Activated CD8-positive, alpha-beta T cell treated with anti-CD3 and anti-CD28 coated beads, Interleukin-2, amount 10 ng/mL, durations not matched to agents 7 days and 5 days (primary cell): ENCODE measurements at regions of chr20 and their contacts with region 1.

Region 1: DNA sequence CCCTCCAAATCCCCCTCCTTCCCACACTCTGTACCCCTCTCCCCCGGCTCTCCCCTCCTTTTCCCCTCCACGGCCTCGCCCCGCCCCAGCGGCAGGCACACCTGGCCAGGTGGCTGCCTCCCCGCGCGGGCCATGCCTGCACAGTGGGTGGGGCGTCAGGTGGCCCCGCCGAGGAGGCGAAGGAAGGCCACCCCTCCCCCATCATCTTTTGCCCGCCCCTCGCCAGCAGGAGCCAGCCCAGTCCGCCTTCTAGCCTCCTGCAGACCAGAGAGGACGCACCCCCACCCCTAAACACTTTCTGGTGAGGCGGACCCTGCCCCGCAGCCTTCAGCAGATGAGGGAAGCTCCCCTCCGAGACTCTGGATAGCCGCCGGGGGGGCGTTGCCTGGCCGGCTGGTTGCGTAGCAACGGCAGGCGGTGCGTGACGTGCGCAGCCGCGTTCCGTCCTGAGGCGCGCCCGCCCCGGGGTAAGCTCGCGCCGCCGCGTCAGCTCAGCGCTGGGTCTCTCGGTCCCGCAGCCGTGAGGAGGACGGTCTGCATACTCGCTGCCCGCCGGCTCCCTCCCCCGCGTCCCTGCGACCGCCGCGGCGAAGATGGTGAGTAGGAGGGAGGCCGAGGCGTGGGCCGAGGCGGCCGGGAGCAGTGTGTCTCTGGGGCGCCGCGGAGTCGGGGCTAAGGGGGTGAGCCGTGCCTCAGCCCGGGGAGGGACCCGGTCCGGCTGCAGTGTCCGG is at the start of gene DSTN:
- DNase-seq: peak; percentile 90
- ATAC-seq: peak; percentile 92
- H3K4me3 Mint-ChIP-seq: peak within 1 kb of the TSS; percentile 92
- H3K27ac Mint-ChIP-seq: peak within 1 kb of the TSS; percentile 87
- H3K4me1 Mint-ChIP-seq: peaks cover 25% of the 10 kb centered on the region
- H3K27me3 Mint-ChIP-seq: peaks cover 20% of the 10 kb centered on the region
- total RNA-seq, gene DSTN: 59.0 to 63.6 TPM

Region 2: DNA sequence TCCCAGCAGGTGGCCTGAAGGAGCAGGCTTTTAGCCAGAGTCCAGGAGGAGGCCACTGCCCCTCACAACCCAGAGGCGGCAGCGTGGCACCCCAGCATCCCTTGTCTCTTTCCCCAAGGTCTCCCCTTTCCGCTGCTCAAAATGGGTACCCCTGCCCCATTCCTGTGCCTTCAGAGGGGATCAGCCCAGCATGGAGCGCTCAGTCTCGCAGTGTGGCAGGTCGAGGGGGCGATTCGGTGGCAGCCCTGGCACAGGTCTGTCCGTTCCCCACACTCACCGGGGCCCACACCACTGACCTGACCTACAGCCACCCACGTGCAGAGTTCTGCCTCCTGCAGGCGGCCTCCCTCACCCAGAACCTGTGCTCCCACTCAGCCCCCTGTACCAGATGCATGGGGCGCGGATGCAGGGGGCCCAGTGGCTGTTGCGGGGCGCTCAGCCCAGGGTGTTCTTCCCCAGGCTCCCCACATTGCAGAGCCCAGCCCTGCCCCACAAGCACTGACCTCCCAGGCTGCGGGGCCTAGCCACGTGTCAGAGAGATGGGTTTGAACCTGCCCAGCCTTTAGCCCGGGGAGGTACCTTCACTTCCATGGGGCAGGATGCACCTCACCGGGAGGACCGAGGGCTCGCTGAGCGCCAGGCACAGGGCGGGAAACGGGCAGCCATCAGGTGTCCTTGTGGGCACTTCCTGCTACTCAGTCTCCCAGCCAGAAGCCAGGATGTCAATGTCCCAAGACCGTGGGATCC is 41.9 kb after region 1 on chr20:
- CTCF ChIA-PET with region 1: interaction called, 9 read pairs
- POLR2A ChIA-PET with region 1: interaction called, 24 read pairs
- DNase-seq: peak; percentile 44
- ATAC-seq: peak; percentile 4
- H3K4me3 Mint-ChIP-seq: peak overlapping the region; percentile 67
- H3K27ac Mint-ChIP-seq: peak overlapping the region; percentile 97
- H3K4me1 Mint-ChIP-seq: peaks cover 47% of the 10 kb centered on the region
- H3K27me3 Mint-ChIP-seq: no peaks in the 10 kb centered on the region

Region 3: GRCh38 chr20:17641993-17642392 is 72.2 kb after region 1 on chr20:
- CTCF ChIA-PET with region 1: no interaction called
- POLR2A ChIA-PET with region 1: no interaction called
- DNase-seq: no peak
- ATAC-seq: no peak
- H3K4me3 Mint-ChIP-seq: no peak overlapping the region
- H3K27ac Mint-ChIP-seq: no peak overlapping the region
- H3K4me1 Mint-ChIP-seq: peaks cover under 1% of the 10 kb centered on the region
- H3K27me3 Mint-ChIP-seq: no peaks in the 10 kb centered on the region